ENCODE measurements at regions of chr1 and their contacts with region 1.

Region 1: GRCh38 chr1:160376525-160377131 is 9.8 kb downstream of the NHLH1 start:
- DNase-seq: peak in 1 of 3 donors; percentile 42
- ATAC-seq: peak; percentile 82 to 90 (median 86)
- H3K4me3 ChIP-seq: no peak overlapping the region
- H3K27ac ChIP-seq: no peak overlapping the region
- H3K4me1 ChIP-seq: no peaks in the 10 kb centered on the region
- H3K27me3 ChIP-seq: no peaks in the 10 kb centered on the region
- CTCF ChIP-seq: peak; percentile 86 to 96 (median 90)
- POLR2A ChIP-seq: no peak

Region 2: DNA sequence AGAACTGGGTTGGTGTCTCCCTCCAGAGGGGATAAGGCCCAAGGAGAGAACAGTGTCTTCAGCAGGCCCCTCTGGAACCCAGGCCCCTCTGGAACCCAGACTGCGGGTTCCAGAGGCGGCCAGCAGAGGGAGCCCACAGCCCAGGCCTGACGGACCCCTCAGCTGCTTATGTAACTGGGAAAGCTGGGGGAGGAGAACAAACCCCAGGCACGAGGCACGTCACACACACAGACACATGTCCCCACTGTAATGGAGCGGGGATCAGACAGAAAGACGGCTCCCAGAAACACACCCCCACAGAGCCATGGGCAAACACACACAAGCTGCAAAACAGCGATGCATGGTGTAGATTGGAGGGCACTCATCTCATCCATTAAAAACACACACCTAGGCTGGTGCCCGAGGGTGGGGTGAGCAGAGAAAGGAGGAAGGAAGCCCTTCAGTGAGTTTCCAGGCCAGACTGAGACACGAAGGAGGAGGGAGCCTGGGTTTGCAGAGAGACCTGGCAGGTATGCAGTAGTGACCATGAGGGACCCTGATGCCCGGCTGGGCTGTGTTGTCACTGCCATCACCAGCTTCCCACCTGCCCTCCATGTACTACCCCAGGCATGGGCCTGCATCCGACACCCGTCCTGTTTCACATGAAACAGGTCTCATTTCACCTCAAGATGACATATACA is 275.5 kb before region 1 on chr1:
- intact Hi-C with region 1: loop called (anchors 10 kb)
- DNase-seq: peak; percentile 67 to 81 (median 77)
- ATAC-seq: peak; percentile 30 to 51 (median 32)
- H3K4me3 ChIP-seq: no peak overlapping the region
- H3K27ac ChIP-seq: peak overlapping the region in 1 of 3 donors; percentile 25
- H3K4me1 ChIP-seq: peaks cover 0 to 36% (median 9%) of the 10 kb centered on the region in 4 donors
- H3K27me3 ChIP-seq: no peaks in the 10 kb centered on the region
- CTCF ChIP-seq: peak; percentile 74 to 88 (median 81)
- POLR2A ChIP-seq: no peak

Region 3: GRCh38 chr1:161117759-161118581 is 741.3 kb after region 1 on chr1 and contains the starts of genes NIT1 and PFDN2:
- intact Hi-C with region 1: no loop called
- DNase-seq: peak; percentile 91 to 92 (median 91)
- ATAC-seq: peak; percentile 86 to 90 (median 88)
- H3K4me3 ChIP-seq: peak within 1 kb of the TSS; percentile 89 to 100 (median 99)
- H3K27ac ChIP-seq: peak within 1 kb of the TSS; percentile 88 to 95 (median 90)
- H3K4me1 ChIP-seq: peaks cover 0 to 50% (median 19%) of the 10 kb centered on the region in 4 donors
- H3K27me3 ChIP-seq: no peaks in the 10 kb centered on the region
- CTCF ChIP-seq: no peak
- POLR2A ChIP-seq: peak; percentile 96
- total RNA-seq, gene NIT1: 36.9 to 67.8 (median 45.8) TPM
- total RNA-seq, gene PFDN2: 16.6 to 37.5 (median 25.8) TPM

Measured in right lobe of liver (tissue), 6 donors.